ENCODE measurements at regions of chr6 and their contacts with region 1.

Region 1: GRCh38 chr6:72689107-72689954 is 67.5 kb downstream of the KCNQ5 start:
- DNase-seq: no peak
- H3K4me3 Mint-ChIP-seq: no peak overlapping the region
- H3K27ac Mint-ChIP-seq: no peak overlapping the region
- H3K4me1 Mint-ChIP-seq: no peaks in the 10 kb centered on the region
- H3K27me3 Mint-ChIP-seq: no peaks in the 10 kb centered on the region

Region 2: DNA sequence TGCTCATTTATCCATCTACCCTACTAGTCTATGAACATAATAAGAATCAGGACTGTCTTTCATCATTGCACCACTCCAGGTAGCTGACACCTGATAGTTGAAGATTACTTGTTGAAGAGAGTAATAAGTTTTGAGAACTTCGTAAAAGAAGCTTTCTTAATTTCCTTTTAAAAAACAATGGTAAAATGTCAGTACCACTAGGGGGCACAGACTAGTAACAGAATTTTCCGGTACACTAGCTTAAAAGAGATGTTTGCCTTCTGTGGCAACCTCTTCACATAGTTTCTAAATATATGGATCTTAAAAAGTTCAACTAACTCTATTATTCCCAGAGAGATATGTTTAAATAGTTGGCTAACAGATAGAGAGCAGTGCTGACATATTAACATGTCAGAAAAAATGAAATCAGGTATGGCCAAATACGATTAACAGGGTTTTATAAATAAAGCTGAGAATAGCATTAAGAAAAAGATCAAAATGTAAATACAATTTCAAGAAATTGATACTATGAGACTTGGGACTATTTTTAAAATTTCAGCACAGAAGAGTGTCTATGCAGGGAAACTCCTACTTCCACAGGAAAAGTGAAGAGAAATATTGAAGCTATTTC is 72.8 kb before region 1 on chr6:
- CTCF ChIA-PET with region 1: interaction called, 10 read pairs
- POLR2A ChIA-PET with region 1: no interaction called
- intact Hi-C with region 1: no loop called
- DNase-seq: no peak
- H3K4me3 Mint-ChIP-seq: no peak overlapping the region
- H3K27ac Mint-ChIP-seq: no peak overlapping the region
- H3K4me1 Mint-ChIP-seq: peaks cover 43% of the 10 kb centered on the region
- H3K27me3 Mint-ChIP-seq: peaks cover 2% of the 10 kb centered on the region

Measured in activated CD4-positive, alpha-beta memory T cell treated with anti-CD3 and anti-CD28 coated beads for 36 hours (primary cell).